ENCODE measurements at regions of chr11 and their contacts with region 1.

Region 1: GRCh38 chr11:109939166-109939810 is 153.9 kb upstream of the ZC3H12C start:
- DNase-seq: peak; percentile 84
- ATAC-seq: peak; percentile 72
- H3K4me3 ChIP-seq: no peak overlapping the region
- H3K27ac ChIP-seq: no peak overlapping the region
- H3K4me1 ChIP-seq: peaks cover 3% of the 10 kb centered on the region; the same call in 1 of the 2 replicates
- H3K27me3 ChIP-seq: no peaks in the 10 kb centered on the region
- CTCF ChIP-seq: peak; percentile 82
- POLR2A ChIP-seq: no peak
- RAD21 ChIP-seq: peak; percentile 89

Region 2: GRCh38 chr11:108121274-108122155 is 1817.8 kb before region 1 on chr11 and contains the start of gene ACAT1:
- CTCF ChIA-PET with region 1: no interaction called
- POLR2A ChIA-PET with region 1: no interaction called
- dilution Hi-C with region 1: no loop called
- in situ Hi-C with region 1: no loop called
- intact Hi-C with region 1: loop called (anchors 5 kb)
- DNase-seq: peak; percentile 82
- ATAC-seq: peak; percentile 98
- H3K4me3 ChIP-seq: peak within 1 kb of the TSS; percentile 86
- H3K27ac ChIP-seq: peak within 1 kb of the TSS; percentile 70
- H3K4me1 ChIP-seq: peaks cover 3% of the 10 kb centered on the region
- H3K27me3 ChIP-seq: no peaks in the 10 kb centered on the region
- CTCF ChIP-seq: peak; percentile 18; the same call in 1 of the 2 replicates
- POLR2A ChIP-seq: peak; percentile 83
- RAD21 ChIP-seq: no peak
- total RNA-seq, gene ACAT1: 57.7 and 87.2 TPM in 2 replicates

Region 3: GRCh38 chr11:109096270-109096669 is 843.0 kb before region 1 on chr11:
- CTCF ChIA-PET with region 1: no interaction called
- POLR2A ChIA-PET with region 1: no interaction called
- dilution Hi-C with region 1: no loop called
- in situ Hi-C with region 1: no loop called
- intact Hi-C with region 1: loop called (anchors 10 kb)
- DNase-seq: no peak
- ATAC-seq: no peak
- H3K4me3 ChIP-seq: no peak overlapping the region
- H3K27ac ChIP-seq: no peak overlapping the region
- H3K4me1 ChIP-seq: no peaks in the 10 kb centered on the region
- H3K27me3 ChIP-seq: no peaks in the 10 kb centered on the region
- CTCF ChIP-seq: no peak
- POLR2A ChIP-seq: no peak
- RAD21 ChIP-seq: no peak

Region 4: GRCh38 chr11:109707411-109707810 is 231.9 kb before region 1 on chr11:
- CTCF ChIA-PET with region 1: interaction called, 3 read pairs
- POLR2A ChIA-PET with region 1: no interaction called
- dilution Hi-C with region 1: no loop called
- in situ Hi-C with region 1: no loop called
- intact Hi-C with region 1: loop called (anchors 10 kb)
- DNase-seq: no peak
- ATAC-seq: no peak
- H3K4me3 ChIP-seq: no peak overlapping the region
- H3K27ac ChIP-seq: no peak overlapping the region
- H3K4me1 ChIP-seq: no peaks in the 10 kb centered on the region
- H3K27me3 ChIP-seq: peaks cover 5% of the 10 kb centered on the region; the same call in 1 of the 2 replicates
- CTCF ChIP-seq: no peak
- POLR2A ChIP-seq: no peak
- RAD21 ChIP-seq: no peak

Region 5: DNA sequence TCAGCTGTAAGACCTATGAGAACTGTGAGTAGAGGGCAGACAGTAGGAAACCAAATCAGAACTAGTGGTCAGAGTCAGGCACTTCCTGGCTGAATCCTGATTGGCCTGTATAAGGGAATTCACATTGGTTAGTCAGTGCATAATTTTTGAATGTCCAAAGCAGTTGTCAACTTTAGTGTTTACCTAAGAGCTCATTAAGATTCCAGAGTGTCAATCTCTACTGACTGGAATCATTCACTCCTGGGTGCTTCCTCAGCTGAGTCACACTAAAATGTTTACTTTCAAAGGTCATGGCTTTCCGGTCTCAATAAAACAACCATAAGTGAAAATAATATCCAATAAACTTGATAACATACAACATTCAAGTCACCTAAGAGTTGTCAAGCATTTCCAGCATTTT is 211.2 kb before region 1 on chr11:
- CTCF ChIA-PET with region 1: no interaction called
- POLR2A ChIA-PET with region 1: no interaction called
- dilution Hi-C with region 1: no loop called
- in situ Hi-C with region 1: no loop called
- intact Hi-C with region 1: no loop called
- DNase-seq: no peak
- ATAC-seq: peak; percentile 17
- H3K4me3 ChIP-seq: no peak overlapping the region
- H3K27ac ChIP-seq: no peak overlapping the region
- H3K4me1 ChIP-seq: no peaks in the 10 kb centered on the region
- H3K27me3 ChIP-seq: no peaks in the 10 kb centered on the region
- CTCF ChIP-seq: no peak
- POLR2A ChIP-seq: no peak
- RAD21 ChIP-seq: no peak

Region 6: DNA sequence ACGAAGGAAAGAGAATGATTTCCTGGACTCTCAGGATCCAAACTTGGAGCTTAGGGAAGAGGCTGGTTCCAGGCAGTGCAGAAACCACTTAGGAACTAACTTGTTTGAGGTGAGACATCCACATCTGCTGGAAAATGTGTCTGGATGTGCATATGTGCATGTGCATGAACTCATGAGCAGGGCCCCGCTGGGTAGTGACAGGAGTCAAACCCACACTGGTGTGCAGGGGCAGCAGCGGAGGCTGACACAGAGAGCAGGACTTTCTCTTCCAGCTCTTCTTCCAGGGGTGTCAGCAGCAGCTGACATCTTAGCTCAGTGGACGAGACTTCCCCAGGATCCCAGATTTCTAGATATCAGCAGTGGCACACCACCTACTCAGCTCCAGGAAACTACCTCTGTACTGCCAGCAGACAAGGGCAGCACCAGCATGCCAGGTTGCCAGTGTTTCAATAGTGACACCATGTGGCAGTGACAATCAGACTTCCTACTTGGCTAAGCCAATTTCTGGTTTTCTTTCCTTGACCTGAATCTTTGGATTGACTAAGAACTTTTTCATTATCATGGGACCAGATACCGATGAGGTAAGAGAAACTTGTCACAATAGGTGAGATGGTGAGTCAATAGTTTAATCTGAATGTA is 73.6 kb before region 1 on chr11:
- CTCF ChIA-PET with region 1: interaction called, 3 read pairs
- POLR2A ChIA-PET with region 1: no interaction called
- dilution Hi-C with region 1: no loop called
- in situ Hi-C with region 1: loop called (anchors 10 kb)
- intact Hi-C with region 1: no loop called
- DNase-seq: no peak
- ATAC-seq: no peak
- H3K4me3 ChIP-seq: no peak overlapping the region
- H3K27ac ChIP-seq: no peak overlapping the region
- H3K4me1 ChIP-seq: no peaks in the 10 kb centered on the region; the same call in 1 of the 2 replicates
- H3K27me3 ChIP-seq: no peaks in the 10 kb centered on the region
- CTCF ChIP-seq: no peak
- POLR2A ChIP-seq: no peak
- RAD21 ChIP-seq: no peak

Region 7: GRCh38 chr11:110219011-110219785 is 279.9 kb after region 1 on chr11:
- CTCF ChIA-PET with region 1: no interaction called
- POLR2A ChIA-PET with region 1: no interaction called
- dilution Hi-C with region 1: no loop called
- in situ Hi-C with region 1: no loop called
- intact Hi-C with region 1: no loop called
- DNase-seq: peak; percentile 53
- ATAC-seq: peak; percentile 32
- H3K4me3 ChIP-seq: no peak overlapping the region
- H3K27ac ChIP-seq: no peak overlapping the region
- H3K4me1 ChIP-seq: no peaks in the 10 kb centered on the region
- H3K27me3 ChIP-seq: no peaks in the 10 kb centered on the region
- CTCF ChIP-seq: no peak
- POLR2A ChIP-seq: no peak
- RAD21 ChIP-seq: no peak

Region 8: DNA sequence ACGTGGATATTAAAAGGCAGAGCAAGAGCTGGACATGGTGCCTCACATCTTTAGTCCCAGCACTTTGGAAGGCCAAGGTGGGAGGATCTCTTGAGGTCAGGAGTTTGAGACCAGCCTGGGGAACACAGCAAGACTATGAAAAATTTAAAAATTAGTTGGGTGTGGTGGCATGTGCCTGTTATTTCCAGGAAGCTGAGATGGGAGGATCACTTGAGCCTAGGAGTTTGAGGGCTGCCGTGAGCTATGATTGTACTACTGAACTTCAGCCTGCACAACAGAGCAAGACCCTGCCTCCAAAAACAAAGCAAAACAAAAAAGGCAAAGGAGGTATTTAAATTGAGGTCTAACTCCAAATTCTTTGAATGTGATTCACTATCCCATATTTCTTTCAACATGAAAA is 333.6 kb after region 1 on chr11:
- CTCF ChIA-PET with region 1: no interaction called
- POLR2A ChIA-PET with region 1: no interaction called
- dilution Hi-C with region 1: no loop called
- in situ Hi-C with region 1: no loop called
- intact Hi-C with region 1: no loop called
- DNase-seq: no peak
- ATAC-seq: no peak
- H3K4me3 ChIP-seq: no peak overlapping the region
- H3K27ac ChIP-seq: no peak overlapping the region
- H3K4me1 ChIP-seq: no peaks in the 10 kb centered on the region
- H3K27me3 ChIP-seq: no peaks in the 10 kb centered on the region
- CTCF ChIP-seq: no peak
- POLR2A ChIP-seq: no peak
- RAD21 ChIP-seq: no peak

Region 9: GRCh38 chr11:110939471-110939870 is 1000.2 kb after region 1 on chr11:
- CTCF ChIA-PET with region 1: no interaction called
- POLR2A ChIA-PET with region 1: no interaction called
- dilution Hi-C with region 1: no loop called
- in situ Hi-C with region 1: no loop called
- intact Hi-C with region 1: no loop called
- DNase-seq: no peak
- ATAC-seq: no peak
- H3K4me3 ChIP-seq: no peak overlapping the region
- H3K27ac ChIP-seq: no peak overlapping the region
- H3K4me1 ChIP-seq: no peaks in the 10 kb centered on the region
- H3K27me3 ChIP-seq: no peaks in the 10 kb centered on the region; the same call in 1 of the 2 replicates
- CTCF ChIP-seq: no peak
- POLR2A ChIP-seq: no peak
- RAD21 ChIP-seq: no peak

Measured in IMR-90 (cell line).